A549 (cell line): ENCODE measurements at regions of chr20 and their contacts with region 1.

Region 1: GRCh38 chr20:54199721-54200176 is 8.1 kb upstream of the PFDN4 start:
- DNase-seq: peak; percentile 62 to 85
- ATAC-seq: peak; percentile 68 to 75
- H3K4me3 ChIP-seq: no peak overlapping the region
- H3K27ac ChIP-seq: peak overlapping the region; percentile 64 to 84; a peak in 5 of 6 replicates
- H3K4me1 ChIP-seq: peaks cover 39% of the 10 kb centered on the region
- CTCF ChIP-seq: peak; percentile 95
- EP300 ChIP-seq: no peak
- POLR2A ChIP-seq: no peak
- RAD21 ChIP-seq: peak; percentile 96 to 98

Region 2: DNA sequence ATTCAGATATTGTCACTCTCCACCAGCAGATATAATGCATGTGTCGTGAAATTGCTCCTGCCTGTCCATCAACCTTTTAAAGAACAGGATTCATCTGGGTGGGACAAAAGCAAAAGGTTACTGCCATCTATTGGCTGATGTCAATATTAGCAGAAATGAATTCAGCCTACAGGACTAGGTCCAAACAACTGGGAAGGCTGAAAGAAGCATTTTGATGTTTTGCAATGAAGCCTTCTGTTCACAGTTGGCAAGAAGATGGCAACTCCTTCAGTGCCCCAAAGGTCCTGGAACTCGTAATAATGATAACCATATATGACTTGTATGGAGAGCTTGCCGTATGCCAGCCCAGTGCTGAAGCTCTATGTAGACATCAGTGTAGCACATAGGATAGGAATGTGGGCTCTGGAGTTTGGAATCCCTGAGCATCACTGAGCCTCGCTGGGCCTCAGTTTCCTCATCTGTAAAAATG is 136.9 kb before region 1 on chr20:
- CTCF ChIA-PET with region 1: interaction called, 29 read pairs
- POLR2A ChIA-PET with region 1: no interaction called
- DNase-seq: peak; percentile 62 to 76
- ATAC-seq: peak; percentile 77 to 82
- H3K4me3 ChIP-seq: no peak overlapping the region
- H3K27ac ChIP-seq: peak overlapping the region in 1 of 2 experiments; percentile 27; a peak in 3 of 6 replicates
- H3K4me1 ChIP-seq: peaks cover 47% of the 10 kb centered on the region
- CTCF ChIP-seq: peak; percentile 88
- EP300 ChIP-seq: no peak
- POLR2A ChIP-seq: no peak
- RAD21 ChIP-seq: peak; percentile 85 to 90

Region 3: GRCh38 chr20:54093423-54094267 is 106.1 kb before region 1 on chr20:
- CTCF ChIA-PET with region 1: interaction called, 655 read pairs
- POLR2A ChIA-PET with region 1: no interaction called
- DNase-seq: no peak
- ATAC-seq: no peak
- H3K4me3 ChIP-seq: no peak overlapping the region
- H3K27ac ChIP-seq: peak overlapping the region in 1 of 2 experiments; percentile 0; a peak in 1 of 6 replicates
- H3K4me1 ChIP-seq: peaks cover 24% of the 10 kb centered on the region
- CTCF ChIP-seq: no peak
- EP300 ChIP-seq: no peak
- POLR2A ChIP-seq: no peak
- RAD21 ChIP-seq: no peak

Region 4: DNA sequence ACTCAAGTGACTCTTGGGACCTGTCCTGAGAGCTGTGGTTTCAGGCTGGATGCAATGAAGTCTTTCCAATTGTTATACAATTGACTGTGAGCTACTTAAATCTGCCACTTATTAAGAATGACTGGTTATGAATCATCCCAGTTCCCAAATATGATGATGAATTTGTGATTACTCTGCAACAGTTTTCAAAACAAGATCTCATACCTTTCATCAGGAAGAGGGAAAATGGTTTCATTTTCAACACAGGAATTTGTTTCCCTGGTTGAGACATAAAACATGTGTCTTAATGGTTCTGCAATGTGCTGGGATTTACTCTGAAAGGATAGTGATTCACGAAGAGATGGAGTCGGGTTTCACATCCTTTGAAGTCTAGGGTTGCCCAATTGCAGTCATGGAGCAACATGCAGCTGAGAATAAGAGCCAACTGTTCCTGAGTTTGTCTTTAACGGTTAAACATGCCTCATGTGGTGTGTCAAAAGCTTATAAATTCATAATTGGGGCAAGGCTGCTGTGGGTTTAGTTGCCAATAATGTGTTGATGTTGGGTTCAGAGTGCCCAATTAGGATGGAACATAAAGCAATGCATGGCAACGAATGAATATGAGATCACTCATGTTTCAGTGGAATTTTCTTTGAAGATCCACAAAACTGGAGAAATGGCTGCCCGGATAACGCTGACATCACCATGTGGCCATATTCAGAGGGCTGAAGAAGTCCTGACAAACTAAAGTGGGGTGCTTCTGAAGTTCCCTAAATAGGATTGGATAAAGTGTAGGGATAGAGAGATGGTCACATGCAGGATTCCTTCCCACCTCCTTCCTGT is 66.9 kb before region 1 on chr20:
- CTCF ChIA-PET with region 1: interaction called, 23 read pairs
- POLR2A ChIA-PET with region 1: interaction called, 3 read pairs
- DNase-seq: peak; percentile 70 to 96
- ATAC-seq: peak; percentile 83 to 93
- H3K4me3 ChIP-seq: no peak overlapping the region
- H3K27ac ChIP-seq: peak overlapping the region; percentile 87 to 96
- H3K4me1 ChIP-seq: peaks cover 49% of the 10 kb centered on the region
- CTCF ChIP-seq: no peak
- EP300 ChIP-seq: peak; percentile 98
- POLR2A ChIP-seq: no peak
- RAD21 ChIP-seq: peak in 1 of 2 experiments; percentile 47; a peak in 4 of 5 replicates

Region 5: DNA sequence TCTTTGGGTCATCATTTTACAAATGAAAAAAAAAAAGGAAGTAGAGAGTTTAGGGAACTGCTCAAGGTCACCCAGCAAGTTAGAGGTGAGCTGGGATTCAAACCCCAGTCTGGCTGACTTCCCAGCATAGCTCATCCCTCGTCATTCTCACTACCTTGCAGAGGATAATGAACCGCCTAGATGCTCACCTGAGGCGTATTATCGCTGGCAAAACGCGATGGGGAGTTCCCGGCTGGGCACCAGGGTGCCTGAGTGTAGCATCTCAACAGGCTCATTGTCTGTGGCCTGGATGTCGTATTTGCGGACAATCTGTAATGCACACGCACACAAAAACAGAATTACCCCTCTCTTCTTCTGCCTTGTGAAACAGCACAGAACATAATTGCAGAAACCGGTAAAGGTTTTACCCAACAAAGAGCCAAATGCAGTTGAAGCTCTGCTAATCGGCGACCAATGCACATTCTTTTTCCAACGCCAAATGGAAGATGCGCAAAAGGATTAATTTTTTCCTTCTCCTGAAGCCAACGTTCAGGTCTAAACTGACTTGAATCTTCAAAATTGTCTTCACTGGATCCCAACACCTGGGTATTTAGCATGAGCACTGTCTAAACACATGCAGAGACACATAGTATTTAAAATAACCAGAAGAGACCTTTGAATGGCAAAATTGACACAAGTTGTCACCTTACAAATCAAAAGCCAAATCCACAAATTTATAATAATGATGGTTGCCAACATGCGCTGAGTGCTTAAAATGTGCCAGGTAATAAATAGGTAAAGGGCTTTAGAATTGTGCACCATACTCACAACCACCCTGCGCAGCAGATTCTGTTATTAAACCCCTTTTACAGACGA is 42.5 kb before region 1 on chr20:
- CTCF ChIA-PET with region 1: interaction called, 97 read pairs
- POLR2A ChIA-PET with region 1: interaction called, 3 read pairs
- DNase-seq: peak in 1 of 2 experiments; percentile 61
- ATAC-seq: no peak
- H3K4me3 ChIP-seq: peak overlapping the region; percentile 5; the same call in 1 of the 3 replicates
- H3K27ac ChIP-seq: peak overlapping the region; percentile 93 to 100
- H3K4me1 ChIP-seq: peaks cover 100% of the 10 kb centered on the region
- CTCF ChIP-seq: no peak
- EP300 ChIP-seq: no peak
- POLR2A ChIP-seq: no peak
- RAD21 ChIP-seq: no peak

Region 6: GRCh38 chr20:54179946-54180345 is 19.8 kb before region 1 on chr20:
- CTCF ChIA-PET with region 1: interaction called, 65 read pairs
- POLR2A ChIA-PET with region 1: interaction called, 6 read pairs
- DNase-seq: no peak
- ATAC-seq: no peak
- H3K4me3 ChIP-seq: no peak overlapping the region
- H3K27ac ChIP-seq: peak overlapping the region in 1 of 2 experiments; percentile 42; a peak in 4 of 6 replicates
- H3K4me1 ChIP-seq: peaks cover 51% of the 10 kb centered on the region
- CTCF ChIP-seq: no peak
- EP300 ChIP-seq: no peak
- POLR2A ChIP-seq: no peak
- RAD21 ChIP-seq: no peak

Region 7: DNA sequence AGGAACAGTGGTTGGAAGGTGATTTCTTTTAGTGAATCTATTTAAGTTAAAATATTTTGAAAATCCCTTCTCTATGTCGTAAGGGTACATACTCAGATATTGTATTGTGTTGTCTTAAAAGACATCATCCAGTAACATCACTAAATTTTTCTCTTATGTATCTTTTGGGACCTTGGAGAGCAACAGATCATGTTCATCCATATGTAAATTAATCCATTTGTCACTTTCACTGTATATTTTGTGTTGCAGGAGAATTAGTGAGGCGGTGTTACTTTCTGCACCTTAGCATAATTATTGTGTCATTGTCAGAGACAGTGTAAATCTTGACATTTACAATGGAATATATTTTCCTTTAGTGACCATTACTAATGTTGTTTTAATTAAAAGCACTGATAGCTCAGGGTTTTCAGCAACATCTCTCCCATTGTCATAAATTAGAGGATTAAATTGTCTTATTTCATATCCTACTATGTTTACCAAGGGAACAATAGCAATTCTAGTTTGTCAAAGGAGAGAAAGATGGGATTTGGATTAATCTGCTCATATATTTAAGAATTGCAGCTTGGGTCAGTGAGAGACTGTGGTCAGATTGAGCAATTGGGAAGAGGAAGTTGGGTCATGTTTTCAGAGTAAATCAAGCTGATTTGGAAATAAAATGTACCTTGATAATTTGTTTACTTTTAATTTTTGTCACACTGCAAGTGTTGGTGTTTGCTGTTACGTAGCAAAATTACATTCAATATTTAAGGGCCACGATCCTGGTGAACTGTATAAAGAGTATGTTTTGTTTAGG is 298.4 kb after region 1 on chr20:
- CTCF ChIA-PET with region 1: no interaction called
- POLR2A ChIA-PET with region 1: no interaction called
- DNase-seq: no peak
- ATAC-seq: no peak
- H3K4me3 ChIP-seq: no peak overlapping the region
- H3K27ac ChIP-seq: no peak overlapping the region
- H3K4me1 ChIP-seq: no peaks in the 10 kb centered on the region
- CTCF ChIP-seq: no peak
- EP300 ChIP-seq: no peak
- POLR2A ChIP-seq: no peak
- RAD21 ChIP-seq: no peak